PC-3 (cell line): ENCODE measurements at regions of chr5 and their contacts with region 1.

Region 1: GRCh38 chr5:14011089-14012004 is 66.9 kb upstream of the DNAH5 start:
- DNase-seq: peak; percentile 95
- ATAC-seq: peak; percentile 72
- H3K4me3 ChIP-seq: peak overlapping the region; percentile 75
- H3K27ac ChIP-seq: peak overlapping the region; percentile 96
- H3K4me1 ChIP-seq: peaks cover 39% of the 10 kb centered on the region
- H3K27me3 ChIP-seq: no peaks in the 10 kb centered on the region
- CTCF ChIP-seq: no peak

Region 2: GRCh38 chr5:14022971-14023370 is 11.6 kb after region 1 on chr5:
- CTCF ChIA-PET with region 1: no interaction called
- POLR2A ChIA-PET with region 1: no interaction called
- intact Hi-C with region 1: no loop called
- DNase-seq: no peak
- ATAC-seq: no peak
- H3K4me3 ChIP-seq: no peak overlapping the region
- H3K27ac ChIP-seq: no peak overlapping the region
- H3K4me1 ChIP-seq: peaks cover 8% of the 10 kb centered on the region
- H3K27me3 ChIP-seq: no peaks in the 10 kb centered on the region
- CTCF ChIP-seq: no peak

Region 3: GRCh38 chr5:14101922-14102321 is 90.6 kb after region 1 on chr5:
- CTCF ChIA-PET with region 1: no interaction called
- POLR2A ChIA-PET with region 1: no interaction called
- intact Hi-C with region 1: loop called (anchors 2 kb)
- DNase-seq: no peak
- ATAC-seq: no peak
- H3K4me3 ChIP-seq: no peak overlapping the region
- H3K27ac ChIP-seq: no peak overlapping the region
- H3K4me1 ChIP-seq: peaks cover 42% of the 10 kb centered on the region
- H3K27me3 ChIP-seq: no peaks in the 10 kb centered on the region
- CTCF ChIP-seq: no peak